ENCODE measurements at regions of chr19 and their contacts with region 1.

Region 1: GRCh38 chr19:34448191-34448590 is 20.0 kb downstream of the UBA2 start:
- DNase-seq: no peak

Region 2: DNA sequence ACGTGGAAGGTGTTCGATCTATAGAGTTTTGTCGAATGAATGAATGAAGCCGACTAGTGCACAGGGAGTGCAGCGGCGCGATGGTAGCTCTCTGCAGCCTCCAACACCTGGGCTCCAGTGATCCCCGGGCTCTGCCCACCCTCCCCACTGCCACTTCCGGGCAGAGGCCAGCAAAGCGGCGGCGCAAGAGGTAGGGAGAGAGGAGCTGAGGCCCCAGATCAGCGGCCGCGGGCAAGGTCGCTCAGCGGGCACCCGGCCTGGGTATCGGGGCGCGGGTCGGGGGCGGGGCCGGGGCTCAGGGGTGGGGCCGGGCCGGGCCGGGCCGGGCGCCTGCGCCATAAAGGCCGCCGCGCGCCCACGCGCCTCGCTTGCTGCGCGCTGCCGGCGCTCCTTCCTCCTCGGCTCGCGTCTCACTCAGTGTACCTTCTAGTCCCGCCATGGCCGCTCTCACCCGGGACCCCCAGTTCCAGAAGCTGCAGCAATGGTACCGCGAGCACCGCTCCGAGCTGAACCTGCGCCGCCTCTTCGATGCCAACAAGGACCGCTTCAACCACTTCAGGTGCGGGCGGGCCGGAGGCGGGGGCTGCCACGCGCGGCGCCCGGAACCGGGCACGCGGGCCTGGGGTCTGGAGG is 83.2 kb before region 1 on chr19 and contains the start of gene GPI:
- in situ Hi-C with region 1: loop called (anchors 10 kb)
- DNase-seq: peak; percentile 73
- total RNA-seq, gene GPI: 829 and 893 TPM in 2 replicates